ENCODE measurements at regions of chr16 and their contacts with region 1.

Region 1: GRCh38 chr16:4634768-4635167 is 10.1 kb downstream of the MGRN1 start:
- DNase-seq: no peak
- H3K4me3 ChIP-seq: no peak overlapping the region
- H3K4me3 Mint-ChIP-seq: no peak overlapping the region
- H3K27ac ChIP-seq: no peak overlapping the region
- H3K27ac Mint-ChIP-seq: peak overlapping the region in 1 of 8 donors; percentile 88
- H3K4me1 ChIP-seq: peaks cover under 1% of the 10 kb centered on the region
- H3K4me1 Mint-ChIP-seq: peaks cover 18 to 33% (median 19%) of the 10 kb centered on the region in 3 donors
- H3K27me3 ChIP-seq: no peaks in the 10 kb centered on the region
- H3K27me3 Mint-ChIP-seq: no peaks in the 10 kb centered on the region

Region 2: GRCh38 chr16:4593069-4593468 is 41.7 kb before region 1 on chr16:
- CTCF ChIA-PET with region 1: no interaction called
- POLR2A ChIA-PET with region 1: no interaction called
- DNase-seq: no peak
- H3K4me3 ChIP-seq: no peak overlapping the region
- H3K4me3 Mint-ChIP-seq: no peak overlapping the region
- H3K27ac ChIP-seq: no peak overlapping the region
- H3K27ac Mint-ChIP-seq: no peak overlapping the region
- H3K4me1 ChIP-seq: no peaks in the 10 kb centered on the region
- H3K4me1 Mint-ChIP-seq: no peaks in the 10 kb centered on the region
- H3K27me3 ChIP-seq: no peaks in the 10 kb centered on the region
- H3K27me3 Mint-ChIP-seq: no peaks in the 10 kb centered on the region

Region 3: GRCh38 chr16:4624015-4624826 is 10.5 kb before region 1 on chr16 and contains the start of gene MGRN1:
- CTCF ChIA-PET with region 1: interaction called, 6 read pairs
- POLR2A ChIA-PET with region 1: interaction called, 11 read pairs
- DNase-seq: peak; percentile 85 to 93 (median 91)
- H3K4me3 ChIP-seq: peak within 1 kb of the TSS; percentile 67
- H3K4me3 Mint-ChIP-seq: peak within 1 kb of the TSS; percentile 88 to 98 (median 94)
- H3K27ac ChIP-seq: peak within 1 kb of the TSS; percentile 94
- H3K27ac Mint-ChIP-seq: peak within 1 kb of the TSS; percentile 84 to 100 (median 98)
- H3K4me1 ChIP-seq: peaks cover 24% of the 10 kb centered on the region
- H3K4me1 Mint-ChIP-seq: peaks cover 28 to 41% (median 38%) of the 10 kb centered on the region in 3 donors
- H3K27me3 ChIP-seq: no peaks in the 10 kb centered on the region
- H3K27me3 Mint-ChIP-seq: no peaks in the 10 kb centered on the region
- total RNA-seq, gene MGRN1: 67.3 to 69.7 TPM